MCF 10A (cell line): ENCODE measurements at regions of chr2 and their contacts with region 1.

Region 1: DNA sequence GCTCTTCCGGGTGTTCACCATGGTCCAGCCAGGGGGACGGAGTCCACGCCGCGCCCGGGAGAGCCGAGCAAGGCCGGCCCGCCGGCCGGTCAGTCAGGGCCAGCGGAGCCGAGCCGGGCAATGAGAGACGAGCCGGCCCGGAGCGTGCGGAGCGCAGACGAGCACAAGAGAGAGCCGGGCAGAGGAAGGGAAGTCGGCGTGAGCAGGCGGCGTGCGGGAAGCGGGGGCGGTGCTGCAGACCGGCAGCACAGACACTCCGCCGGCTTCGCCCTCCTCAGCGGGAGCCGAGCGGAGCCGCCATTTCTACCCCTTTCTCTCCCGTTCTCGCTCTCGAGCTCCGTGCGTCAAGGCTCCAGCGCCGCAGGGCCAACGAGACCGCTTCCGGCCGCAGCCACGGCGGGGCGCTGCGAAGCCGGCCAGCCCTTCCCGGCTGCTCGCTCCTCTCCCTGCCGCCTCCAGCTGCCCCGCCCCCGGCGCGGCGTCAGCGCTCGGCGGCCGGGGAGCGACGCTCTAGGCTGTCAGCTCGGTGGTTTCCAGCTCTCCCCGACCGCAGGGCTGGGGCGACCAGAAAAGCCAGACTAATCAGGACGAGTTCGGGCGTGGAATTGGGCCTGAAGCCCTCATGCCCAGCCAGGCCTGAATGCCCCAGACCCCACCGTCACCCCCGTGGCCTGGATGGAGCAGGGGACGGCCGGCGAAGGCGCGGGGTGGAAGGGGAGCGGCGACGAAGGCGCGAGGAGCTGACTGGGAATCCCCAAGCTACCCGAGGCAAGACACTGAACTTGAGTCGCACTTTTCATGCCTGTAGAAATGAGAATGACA is at the start of gene ATAD2B:
- DNase-seq: peak; percentile 92
- H3K4me3 Mint-ChIP-seq: peak within 1 kb of the TSS; percentile 98
- H3K27ac Mint-ChIP-seq: peak within 1 kb of the TSS; percentile 99
- H3K4me1 Mint-ChIP-seq: peaks cover 37% of the 10 kb centered on the region
- H3K27me3 Mint-ChIP-seq: no peaks in the 10 kb centered on the region
- CTCF ChIP-seq: peak; percentile 83
- total RNA-seq, gene ATAD2B: 19.6 and 19.7 TPM in 2 replicates

Region 2: DNA sequence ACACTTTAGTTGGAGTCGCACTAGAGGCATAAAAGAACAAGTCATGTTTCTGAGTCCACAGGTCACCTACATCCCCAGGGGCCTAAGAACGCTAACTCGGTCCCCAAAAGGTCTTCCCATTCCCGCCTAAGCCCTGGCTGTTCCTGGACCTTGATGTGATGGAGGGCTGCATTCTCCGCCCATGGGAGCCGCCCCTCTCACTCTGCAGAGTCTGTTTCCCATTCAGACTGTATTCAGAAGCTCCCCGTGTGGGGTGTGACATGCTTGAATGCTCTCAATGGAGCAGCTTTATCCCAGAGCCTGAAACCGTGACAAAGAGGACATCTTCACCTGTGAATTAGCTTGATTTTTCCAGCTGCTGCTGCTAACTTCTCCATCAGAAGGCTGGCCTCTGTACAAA is 861.0 kb before region 1 on chr2:
- CTCF ChIA-PET with region 1: no interaction called
- POLR2A ChIA-PET with region 1: no interaction called
- intact Hi-C with region 1: no loop called
- DNase-seq: no peak
- H3K4me3 Mint-ChIP-seq: no peak overlapping the region
- H3K27ac Mint-ChIP-seq: no peak overlapping the region
- H3K4me1 Mint-ChIP-seq: no peaks in the 10 kb centered on the region
- H3K27me3 Mint-ChIP-seq: peaks cover 31% of the 10 kb centered on the region
- CTCF ChIP-seq: no peak

Region 3: GRCh38 chr2:23606968-23607367 is 320.0 kb before region 1 on chr2:
- CTCF ChIA-PET with region 1: no interaction called
- POLR2A ChIA-PET with region 1: no interaction called
- intact Hi-C with region 1: no loop called
- DNase-seq: peak; percentile 36
- H3K4me3 Mint-ChIP-seq: no peak overlapping the region
- H3K27ac Mint-ChIP-seq: no peak overlapping the region
- H3K4me1 Mint-ChIP-seq: peaks cover 8% of the 10 kb centered on the region
- H3K27me3 Mint-ChIP-seq: no peaks in the 10 kb centered on the region
- CTCF ChIP-seq: no peak

Region 4: GRCh38 chr2:23673830-23674679 is 252.9 kb before region 1 on chr2:
- CTCF ChIA-PET with region 1: no interaction called
- POLR2A ChIA-PET with region 1: no interaction called
- intact Hi-C with region 1: no loop called
- DNase-seq: peak; percentile 35
- H3K4me3 Mint-ChIP-seq: no peak overlapping the region
- H3K27ac Mint-ChIP-seq: no peak overlapping the region
- H3K4me1 Mint-ChIP-seq: peaks cover 12% of the 10 kb centered on the region
- H3K27me3 Mint-ChIP-seq: no peaks in the 10 kb centered on the region
- CTCF ChIP-seq: no peak

Region 5: DNA sequence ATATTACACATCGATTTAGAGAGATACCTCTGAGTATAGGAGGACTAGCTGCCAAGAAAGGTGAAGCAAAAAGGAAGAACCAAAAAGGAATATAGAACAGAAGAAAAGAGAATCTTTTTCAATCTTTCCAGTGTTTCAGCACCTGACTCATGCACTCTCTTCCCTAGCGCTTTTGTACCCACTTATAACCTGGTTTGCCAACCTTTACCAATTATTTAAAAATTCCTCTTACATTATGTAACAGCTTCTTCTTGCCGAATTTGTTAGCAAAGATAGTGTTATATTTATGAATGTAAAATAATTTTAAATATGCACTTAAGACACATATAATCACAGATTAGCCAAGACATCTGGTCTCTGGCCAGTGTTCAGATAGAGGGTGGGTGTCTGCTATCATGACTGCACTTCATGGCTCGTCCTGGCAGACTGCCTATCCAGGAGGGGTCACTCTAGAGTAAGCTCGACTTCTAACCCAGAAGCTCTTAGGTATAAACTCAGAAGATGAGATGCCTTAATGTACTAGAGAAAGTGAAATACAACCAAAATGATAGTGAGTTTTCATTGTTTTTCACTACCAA is 122.9 kb before region 1 on chr2:
- CTCF ChIA-PET with region 1: interaction called, 22 read pairs
- POLR2A ChIA-PET with region 1: interaction called, 47 read pairs
- intact Hi-C with region 1: no loop called
- DNase-seq: peak; percentile 75
- H3K4me3 Mint-ChIP-seq: peak overlapping the region; percentile 58
- H3K27ac Mint-ChIP-seq: peak overlapping the region; percentile 83
- H3K4me1 Mint-ChIP-seq: peaks cover 24% of the 10 kb centered on the region
- H3K27me3 Mint-ChIP-seq: no peaks in the 10 kb centered on the region
- CTCF ChIP-seq: peak; percentile 38

Region 6: GRCh38 chr2:23900927-23901322 is 26.0 kb before region 1 on chr2:
- CTCF ChIA-PET with region 1: interaction called, 38 read pairs
- POLR2A ChIA-PET with region 1: interaction called, 144 read pairs
- intact Hi-C with region 1: no loop called
- DNase-seq: peak; percentile 77
- H3K4me3 Mint-ChIP-seq: no peak overlapping the region
- H3K27ac Mint-ChIP-seq: peak overlapping the region; percentile 49
- H3K4me1 Mint-ChIP-seq: peaks cover 24% of the 10 kb centered on the region
- H3K27me3 Mint-ChIP-seq: no peaks in the 10 kb centered on the region
- CTCF ChIP-seq: no peak

Region 7: GRCh38 chr2:23939987-23940717 is 13.2 kb after region 1 on chr2 and contains the start of gene UBXN2A:
- CTCF ChIA-PET with region 1: interaction called, 49 read pairs
- POLR2A ChIA-PET with region 1: interaction called, 150 read pairs
- intact Hi-C with region 1: loop called (anchors 1 kb)
- DNase-seq: peak; percentile 75
- H3K4me3 Mint-ChIP-seq: peak within 1 kb of the TSS; percentile 76
- H3K27ac Mint-ChIP-seq: peak within 1 kb of the TSS; percentile 30
- H3K4me1 Mint-ChIP-seq: peaks cover 25% of the 10 kb centered on the region
- H3K27me3 Mint-ChIP-seq: no peaks in the 10 kb centered on the region
- CTCF ChIP-seq: no peak
- total RNA-seq, gene UBXN2A: 13.0 and 13.6 TPM in 2 replicates

Region 8: GRCh38 chr2:23976883-23977282 is 49.9 kb after region 1 on chr2:
- CTCF ChIA-PET with region 1: no interaction called
- POLR2A ChIA-PET with region 1: no interaction called
- intact Hi-C with region 1: no loop called
- DNase-seq: no peak
- H3K4me3 Mint-ChIP-seq: no peak overlapping the region
- H3K27ac Mint-ChIP-seq: no peak overlapping the region
- H3K4me1 Mint-ChIP-seq: peaks cover 3% of the 10 kb centered on the region
- H3K27me3 Mint-ChIP-seq: no peaks in the 10 kb centered on the region
- CTCF ChIP-seq: no peak

Region 9: DNA sequence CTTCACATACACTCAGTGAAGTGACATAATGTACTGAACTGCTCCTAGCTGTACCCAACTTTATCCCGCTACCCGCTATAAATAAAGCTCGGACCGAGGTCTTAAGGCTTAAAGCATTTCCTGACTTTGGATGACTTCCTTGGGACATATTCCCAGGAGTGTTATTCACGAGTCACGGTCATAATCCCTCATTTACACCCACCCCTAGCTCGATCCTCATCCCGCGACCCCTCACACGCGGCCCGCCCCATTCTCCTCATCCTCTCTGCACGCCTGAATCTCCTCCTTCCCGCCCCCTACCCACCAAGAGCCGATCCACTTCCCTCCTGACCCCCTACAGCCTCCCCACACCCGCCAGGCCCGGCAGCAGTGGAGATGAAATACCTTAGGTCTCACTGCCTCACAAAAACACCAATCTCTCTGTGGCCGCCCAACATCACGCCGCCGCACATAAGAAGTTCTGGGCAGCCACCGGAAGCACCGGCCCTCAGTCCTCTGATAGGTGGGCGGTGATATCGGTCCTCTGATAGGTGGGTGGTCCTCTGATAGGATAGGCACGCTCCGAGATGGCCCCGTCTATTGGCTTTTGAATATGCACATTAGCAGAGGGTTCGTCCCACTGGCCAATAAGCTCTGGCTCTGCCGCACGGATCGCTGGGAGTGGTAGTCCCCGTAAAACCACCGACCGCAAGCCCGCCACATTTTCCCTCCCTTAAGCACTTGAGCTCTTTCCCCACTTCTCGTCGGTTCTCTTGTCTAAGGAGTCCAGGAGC is 120.2 kb after region 1 on chr2 and contains the start of gene WDCP:
- CTCF ChIA-PET with region 1: interaction called, 4 read pairs
- POLR2A ChIA-PET with region 1: interaction called, 15 read pairs
- intact Hi-C with region 1: no loop called
- DNase-seq: peak; percentile 99
- H3K4me3 Mint-ChIP-seq: peak within 1 kb of the TSS; percentile 97
- H3K27ac Mint-ChIP-seq: peak within 1 kb of the TSS; percentile 83
- H3K4me1 Mint-ChIP-seq: peaks cover 24% of the 10 kb centered on the region
- H3K27me3 Mint-ChIP-seq: no peaks in the 10 kb centered on the region
- CTCF ChIP-seq: no peak
- total RNA-seq, gene WDCP: 9.0 and 11.2 TPM in 2 replicates

Region 10: DNA sequence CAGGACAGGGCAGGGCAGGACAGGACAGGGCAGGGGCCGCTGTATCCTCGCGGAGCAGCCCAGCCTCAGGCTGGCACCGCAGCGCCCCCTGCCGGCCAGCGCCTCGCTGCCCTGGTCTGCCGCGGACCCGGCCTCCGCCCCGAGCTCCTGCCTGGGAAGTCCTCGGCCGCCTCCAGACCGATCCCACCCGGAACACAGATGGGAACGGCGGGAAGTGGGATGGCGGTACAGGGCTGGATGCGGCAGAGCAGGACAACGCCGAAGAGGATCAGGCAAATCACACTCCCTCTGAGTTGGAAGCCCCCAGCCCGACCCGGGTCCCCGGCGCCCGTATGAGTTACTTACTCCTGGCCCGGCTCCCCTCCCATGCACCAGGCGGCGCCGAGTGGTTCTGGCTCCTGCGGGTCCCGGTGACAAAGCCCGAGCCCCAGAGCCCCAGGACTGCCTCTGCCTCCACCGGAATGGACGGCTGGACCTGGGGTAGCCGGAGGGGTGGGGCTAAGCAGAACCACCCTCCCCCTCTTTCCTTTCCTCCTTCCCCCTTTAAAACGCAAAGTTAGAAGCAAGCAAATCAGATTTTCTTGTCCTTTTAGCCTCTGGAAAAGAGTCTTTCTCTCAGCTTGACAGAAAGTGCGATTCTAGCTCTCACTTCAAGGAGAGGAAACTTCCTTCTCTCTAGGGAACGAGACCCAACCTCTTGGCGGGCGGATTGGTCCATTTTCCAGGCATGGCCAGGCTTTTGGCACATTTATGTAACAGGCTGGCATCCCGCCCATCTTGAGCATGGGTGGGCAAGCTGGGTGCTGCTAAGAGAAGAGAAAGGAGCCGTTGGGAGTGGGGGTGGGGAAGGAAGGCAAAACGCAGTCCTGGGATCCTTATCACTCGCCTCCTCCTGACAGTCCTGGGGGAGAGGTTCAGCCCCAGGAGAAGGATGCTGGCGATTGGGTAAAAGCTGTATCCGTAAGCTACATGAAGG is 157.7 kb after region 1 on chr2 and contains the start of gene TP53I3:
- CTCF ChIA-PET with region 1: interaction called, 41 read pairs
- POLR2A ChIA-PET with region 1: interaction called, 108 read pairs
- intact Hi-C with region 1: loop called (anchors 1 kb)
- DNase-seq: peak; percentile 85
- H3K4me3 Mint-ChIP-seq: peak within 1 kb of the TSS; percentile 75
- H3K27ac Mint-ChIP-seq: peak within 1 kb of the TSS; percentile 92
- H3K4me1 Mint-ChIP-seq: peaks cover 28% of the 10 kb centered on the region
- H3K27me3 Mint-ChIP-seq: no peaks in the 10 kb centered on the region
- CTCF ChIP-seq: peak; percentile 94
- total RNA-seq, gene TP53I3: 81.8 and 99.8 TPM in 2 replicates